ENCODE measurements at regions of chrX and their contacts with region 1.

Region 1: GRCh38 chrX:63250253-63250868 is 100.8 kb downstream of the SPIN4 start:
- DNase-seq: peak; percentile 56
- H3K4me3 ChIP-seq: no peak overlapping the region
- H3K27ac ChIP-seq: no peak overlapping the region
- H3K27me3 ChIP-seq: no peaks in the 10 kb centered on the region
- CTCF ChIP-seq: peak; percentile 91

Region 2: DNA sequence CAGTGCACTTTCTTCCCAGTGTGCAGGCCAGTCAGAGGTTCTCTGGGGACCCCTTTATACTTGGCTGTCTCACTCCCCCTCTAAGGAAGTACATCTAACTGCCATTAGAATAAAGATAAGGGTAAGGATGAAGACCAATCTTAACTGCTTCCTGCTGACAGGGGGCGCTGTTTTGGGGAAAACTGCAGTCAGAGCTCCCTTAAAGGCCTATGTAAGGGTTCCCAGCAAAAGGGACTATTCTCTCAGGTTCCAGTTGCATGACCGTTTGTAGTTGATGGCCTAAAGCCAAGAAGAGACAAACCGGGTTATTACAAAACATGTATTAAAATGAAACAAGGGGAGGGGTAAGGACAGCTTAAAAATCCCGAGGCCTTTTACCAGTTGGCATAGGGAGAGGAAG is 216.3 kb after region 1 on chrX:
- CTCF ChIA-PET with region 1: no interaction called
- POLR2A ChIA-PET with region 1: no interaction called
- DNase-seq: no peak
- H3K4me3 ChIP-seq: no peak overlapping the region
- H3K27ac ChIP-seq: no peak overlapping the region
- H3K27me3 ChIP-seq: no peaks in the 10 kb centered on the region
- CTCF ChIP-seq: no peak

Region 3: GRCh38 chrX:63506320-63506719 is 256.0 kb after region 1 on chrX:
- CTCF ChIA-PET with region 1: interaction called, 17 read pairs
- POLR2A ChIA-PET with region 1: no interaction called
- DNase-seq: no peak
- H3K4me3 ChIP-seq: no peak overlapping the region
- H3K27ac ChIP-seq: no peak overlapping the region
- H3K27me3 ChIP-seq: no peaks in the 10 kb centered on the region
- CTCF ChIP-seq: 0 out of 2 replicates have a peak, but pooled peaks have one; percentile 32

Region 4: GRCh38 chrX:63686878-63687714 is 436.7 kb after region 1 on chrX:
- CTCF ChIA-PET with region 1: interaction called, 24 read pairs
- POLR2A ChIA-PET with region 1: no interaction called
- DNase-seq: peak; percentile 4
- H3K4me3 ChIP-seq: no peak overlapping the region
- H3K27ac ChIP-seq: no peak overlapping the region
- H3K27me3 ChIP-seq: no peaks in the 10 kb centered on the region
- CTCF ChIP-seq: peak; percentile 71

Region 5: DNA sequence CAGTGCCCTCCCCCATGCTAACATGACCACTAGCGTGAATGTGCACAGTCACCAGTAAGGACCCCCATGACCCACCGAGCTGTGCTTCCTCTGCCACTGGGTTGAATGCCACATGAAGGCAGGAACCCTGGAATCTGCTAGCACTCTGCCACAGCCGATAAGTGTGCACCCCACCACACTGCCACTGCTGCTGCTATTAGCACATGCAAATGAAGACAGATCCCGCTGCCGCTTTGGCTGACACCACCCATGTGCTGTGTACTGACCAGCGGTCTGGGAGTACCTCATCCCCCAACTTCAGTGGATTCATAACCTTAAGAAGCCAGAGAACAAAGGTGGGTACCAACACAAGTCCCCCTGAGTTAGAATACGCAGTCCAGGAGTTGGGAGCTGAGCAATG is 735.5 kb after region 1 on chrX:
- CTCF ChIA-PET with region 1: no interaction called
- POLR2A ChIA-PET with region 1: no interaction called
- DNase-seq: no peak
- H3K4me3 ChIP-seq: no peak overlapping the region
- H3K27ac ChIP-seq: no peak overlapping the region
- H3K27me3 ChIP-seq: no peaks in the 10 kb centered on the region
- CTCF ChIP-seq: no peak